Tibial artery (tissue), 4 donors: ENCODE measurements at regions of chr5 and their contacts with region 1.

Region 1: GRCh38 chr5:173972925-173973615 is 15.9 kb upstream of the C5orf47 start:
- DNase-seq: peak; percentile 84 to 88
- H3K4me3 ChIP-seq: peak overlapping the region; percentile 42 to 49
- H3K27ac ChIP-seq: peak overlapping the region in 1 of 2 donors; percentile 16
- H3K4me1 ChIP-seq: peaks cover 0 to 19% (median 9%) of the 10 kb centered on the region in 4 donors
- H3K27me3 ChIP-seq: no peaks in the 10 kb centered on the region
- CTCF ChIP-seq: peak; percentile 85 to 95

Region 2: DNA sequence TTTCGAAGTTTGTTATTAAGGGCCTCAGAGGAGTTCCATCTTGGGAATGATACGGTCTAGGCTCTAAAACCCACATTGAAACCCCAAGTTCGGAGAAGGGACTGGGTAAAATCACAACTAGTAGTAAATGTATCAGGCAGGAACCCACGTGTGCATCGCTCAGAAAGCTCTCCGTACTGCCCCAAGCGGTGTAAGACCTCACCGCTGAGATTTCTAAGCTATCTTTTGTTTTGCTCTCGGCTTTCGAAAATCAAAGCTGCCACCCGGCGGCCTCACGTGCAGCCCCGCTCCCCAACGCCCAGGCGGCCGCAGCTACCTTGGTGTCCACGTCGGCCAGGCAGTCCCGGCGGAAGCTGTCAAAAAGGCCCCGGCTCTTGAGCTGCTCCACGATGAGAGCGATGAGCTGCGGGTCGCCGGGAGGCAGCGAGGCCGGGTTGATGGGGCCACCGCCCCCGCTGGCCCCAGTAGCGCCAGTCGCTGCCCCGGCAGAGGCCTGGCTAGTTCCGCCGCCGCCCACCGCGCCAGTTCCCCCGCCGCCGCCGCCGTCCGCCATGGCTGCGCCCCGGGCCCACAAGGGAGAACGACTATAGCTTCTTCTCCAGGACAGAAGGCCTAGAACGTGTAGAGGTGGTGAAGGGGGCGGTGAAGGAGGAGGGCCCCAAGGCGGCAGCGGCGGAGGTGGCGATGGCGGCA is 357.0 kb before region 1 on chr5:
- intact Hi-C with region 1: loop called (anchors 2 kb)
- DNase-seq: peak; percentile 49 to 74
- H3K4me3 ChIP-seq: peak overlapping the region; percentile 85 to 91
- H3K27ac ChIP-seq: peak overlapping the region; percentile 94 to 99
- H3K4me1 ChIP-seq: peaks cover 0 to 38% (median 24%) of the 10 kb centered on the region in 4 donors
- H3K27me3 ChIP-seq: no peaks in the 10 kb centered on the region
- CTCF ChIP-seq: peak; percentile 58 to 67

Region 3: DNA sequence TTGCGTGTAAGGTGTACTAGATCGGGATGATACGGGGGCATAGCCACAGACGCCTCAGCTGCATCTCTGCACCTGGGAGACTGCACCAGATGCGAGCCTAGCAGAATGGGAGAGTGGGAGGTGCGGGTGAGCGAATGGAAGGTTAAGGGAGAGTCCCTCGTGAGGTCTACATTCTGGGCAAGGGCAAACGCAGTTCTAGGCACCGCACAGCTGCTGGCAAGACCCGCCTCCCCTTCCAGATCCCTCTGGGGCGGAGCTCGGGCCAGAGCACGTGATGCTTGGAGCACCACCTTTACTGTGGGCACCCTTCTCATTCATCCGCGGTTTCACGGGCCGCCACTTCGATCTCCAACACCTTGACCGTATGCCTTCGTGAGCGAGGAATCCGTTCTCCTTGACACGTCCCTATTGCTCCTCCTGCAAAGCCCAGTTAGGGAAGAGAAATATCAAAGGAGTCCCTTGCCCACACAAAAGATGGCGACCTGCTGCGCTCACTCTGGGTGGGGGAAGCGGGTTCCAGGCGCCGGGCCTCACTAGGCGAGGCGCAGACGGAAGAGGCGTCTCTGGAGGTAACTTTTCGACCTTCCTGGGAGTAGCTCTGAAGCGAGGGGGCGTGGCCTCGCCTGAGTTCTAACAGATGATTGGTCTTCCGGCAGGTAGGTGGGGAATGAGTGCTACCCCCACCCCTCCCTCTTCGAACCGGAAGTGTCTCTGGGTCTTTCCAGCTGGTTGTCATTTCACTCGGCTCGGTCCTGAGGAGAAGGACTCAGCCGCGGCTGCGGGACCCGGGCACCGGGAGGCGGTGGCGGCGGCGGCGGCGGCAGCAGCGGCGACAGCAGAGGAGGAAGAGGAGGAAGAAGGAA is 85.2 kb before region 1 on chr5 and contains the start of gene CPEB4:
- intact Hi-C with region 1: loop called (anchors 5 kb)
- DNase-seq: peak; percentile 99 to 100
- H3K4me3 ChIP-seq: peak within 1 kb of the TSS; percentile 77 to 93
- H3K27ac ChIP-seq: peak within 1 kb of the TSS; percentile 82 to 89
- H3K4me1 ChIP-seq: peaks cover 0 to 25% (median 9%) of the 10 kb centered on the region in 4 donors
- H3K27me3 ChIP-seq: no peaks in the 10 kb centered on the region
- CTCF ChIP-seq: no peak

Region 4: GRCh38 chr5:173907686-173908371 is 65.2 kb before region 1 on chr5:
- intact Hi-C with region 1: no loop called
- DNase-seq: no peak
- H3K4me3 ChIP-seq: no peak overlapping the region
- H3K27ac ChIP-seq: peak overlapping the region in 1 of 2 donors; percentile 9
- H3K4me1 ChIP-seq: peaks cover 0 to 76% (median 30%) of the 10 kb centered on the region in 4 donors
- H3K27me3 ChIP-seq: no peaks in the 10 kb centered on the region
- CTCF ChIP-seq: no peak

Region 5: GRCh38 chr5:173925448-173926071 is 47.5 kb before region 1 on chr5:
- intact Hi-C with region 1: loop called (anchors 5 kb)
- DNase-seq: peak in 1 of 2 donors; percentile 35
- H3K4me3 ChIP-seq: no peak overlapping the region
- H3K27ac ChIP-seq: peak overlapping the region; percentile 81 to 82
- H3K4me1 ChIP-seq: peaks cover 0 to 75% (median 66%) of the 10 kb centered on the region in 4 donors
- H3K27me3 ChIP-seq: no peaks in the 10 kb centered on the region
- CTCF ChIP-seq: peak in 1 of 2 experiments; percentile 19

Region 6: DNA sequence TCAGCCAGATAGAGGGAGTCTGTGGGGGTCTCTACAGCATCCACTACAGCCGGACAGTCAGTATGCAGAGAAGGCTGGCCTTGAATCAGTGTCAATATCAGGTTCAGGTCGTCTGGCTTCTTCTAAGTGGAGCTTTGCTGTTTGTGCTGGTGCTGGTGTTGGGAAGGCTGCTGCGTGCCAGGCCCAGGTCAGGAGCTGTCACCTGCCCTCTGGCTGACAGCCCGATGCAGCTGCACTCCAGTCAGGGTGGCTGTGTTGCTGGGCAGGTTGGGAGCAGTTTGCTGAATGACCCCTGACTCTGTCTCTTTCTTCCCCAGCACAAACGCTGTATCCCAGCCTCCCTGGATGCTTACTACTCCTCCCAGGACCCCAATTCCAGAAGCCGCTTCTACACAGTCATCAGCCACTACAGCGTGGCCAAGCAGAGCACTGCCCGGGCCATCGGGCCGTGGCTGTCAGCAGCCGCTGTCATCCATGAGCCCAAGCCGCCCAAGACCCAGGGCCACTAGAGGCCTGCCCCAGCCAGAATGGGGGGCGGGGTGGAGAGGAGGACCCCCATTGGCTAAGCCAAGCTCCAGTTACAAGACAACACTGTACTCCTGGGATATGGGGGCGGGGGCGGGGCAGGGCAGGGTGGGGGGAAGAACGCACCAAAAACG is 134.1 kb after region 1 on chr5:
- intact Hi-C with region 1: no loop called
- DNase-seq: no peak
- H3K4me3 ChIP-seq: no peak overlapping the region
- H3K27ac ChIP-seq: no peak overlapping the region
- H3K4me1 ChIP-seq: no peaks in the 10 kb centered on the region
- H3K27me3 ChIP-seq: no peaks in the 10 kb centered on the region
- CTCF ChIP-seq: no peak